Activated CD8-positive, alpha-beta T cell treated with anti-CD3 and anti-CD28 coated beads for 36 hours (primary cell): ENCODE measurements at regions of chr11 and their contacts with region 1.

Region 1: GRCh38 chr11:93741094-93741881 is at the starts of genes C11orf54 and TAF1D:
- DNase-seq: peak; percentile 97
- ATAC-seq: peak; percentile 87
- H3K4me3 Mint-ChIP-seq: peak within 1 kb of the TSS; percentile 98
- H3K27ac Mint-ChIP-seq: peak within 1 kb of the TSS; percentile 100
- H3K4me1 Mint-ChIP-seq: peaks cover 40% of the 10 kb centered on the region
- H3K27me3 Mint-ChIP-seq: no peaks in the 10 kb centered on the region
- CTCF ChIP-seq: no peak
- total RNA-seq, gene C11orf54: 17.0 to 18.9 TPM
- total RNA-seq, gene TAF1D: 334 to 344 TPM

Region 2: DNA sequence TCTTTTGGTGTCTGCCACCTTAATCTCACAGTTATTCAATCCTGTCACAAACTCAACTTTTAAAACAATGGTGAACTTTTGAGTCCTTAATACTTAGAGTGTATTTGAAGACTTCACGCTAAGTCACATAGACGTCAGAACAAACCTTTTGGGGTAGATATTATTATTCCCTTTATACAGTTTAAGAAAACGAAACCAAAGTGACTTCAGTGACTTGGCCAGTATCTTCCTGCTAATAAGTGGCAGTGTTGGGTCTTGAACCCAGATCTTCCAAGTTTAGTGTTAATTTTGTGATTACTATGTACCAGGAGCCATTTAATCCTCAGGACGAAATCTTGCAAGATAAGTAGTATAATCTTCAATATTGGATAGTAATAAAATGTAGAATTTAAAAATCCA is 79.1 kb before region 1 on chr11:
- CTCF ChIA-PET with region 1: no interaction called
- POLR2A ChIA-PET with region 1: interaction called, 25 read pairs
- intact Hi-C with region 1: no loop called
- DNase-seq: no peak
- ATAC-seq: no peak
- H3K4me3 Mint-ChIP-seq: peak overlapping the region; percentile 91
- H3K27ac Mint-ChIP-seq: peak overlapping the region; percentile 93
- H3K4me1 Mint-ChIP-seq: peaks cover 33% of the 10 kb centered on the region
- H3K27me3 Mint-ChIP-seq: no peaks in the 10 kb centered on the region
- CTCF ChIP-seq: no peak

Region 3: GRCh38 chr11:93727985-93728791 is 13.1 kb before region 1 on chr11:
- CTCF ChIA-PET with region 1: no interaction called
- POLR2A ChIA-PET with region 1: interaction called, 125 read pairs
- intact Hi-C with region 1: no loop called
- DNase-seq: no peak
- ATAC-seq: no peak
- H3K4me3 Mint-ChIP-seq: no peak overlapping the region
- H3K27ac Mint-ChIP-seq: peak overlapping the region; percentile 48
- H3K4me1 Mint-ChIP-seq: peaks cover 11% of the 10 kb centered on the region
- H3K27me3 Mint-ChIP-seq: no peaks in the 10 kb centered on the region
- CTCF ChIP-seq: no peak

Region 4: GRCh38 chr11:93756748-93757147 is 15.5 kb after region 1 on chr11:
- CTCF ChIA-PET with region 1: interaction called, 3 read pairs
- POLR2A ChIA-PET with region 1: interaction called, 14 read pairs
- intact Hi-C with region 1: no loop called
- DNase-seq: no peak
- ATAC-seq: no peak
- H3K4me3 Mint-ChIP-seq: no peak overlapping the region
- H3K27ac Mint-ChIP-seq: no peak overlapping the region
- H3K4me1 Mint-ChIP-seq: no peaks in the 10 kb centered on the region
- H3K27me3 Mint-ChIP-seq: no peaks in the 10 kb centered on the region
- CTCF ChIP-seq: no peak

Region 5: GRCh38 chr11:93784152-93784934 is 43.1 kb after region 1 on chr11 and contains the start of gene MED17:
- CTCF ChIA-PET with region 1: interaction called, 5 read pairs
- POLR2A ChIA-PET with region 1: interaction called, 109 read pairs
- intact Hi-C with region 1: loop called (anchors 2 kb)
- DNase-seq: peak; percentile 93
- ATAC-seq: peak; percentile 96
- H3K4me3 Mint-ChIP-seq: peak within 1 kb of the TSS; percentile 98
- H3K27ac Mint-ChIP-seq: peak within 1 kb of the TSS; percentile 96
- H3K4me1 Mint-ChIP-seq: peaks cover 32% of the 10 kb centered on the region
- H3K27me3 Mint-ChIP-seq: no peaks in the 10 kb centered on the region
- CTCF ChIP-seq: peak; percentile 50
- total RNA-seq, gene MED17: 30.1 to 31.3 TPM

Region 6: GRCh38 chr11:93817426-93818348 is 76.4 kb after region 1 on chr11:
- CTCF ChIA-PET with region 1: no interaction called
- POLR2A ChIA-PET with region 1: no interaction called
- intact Hi-C with region 1: no loop called
- DNase-seq: no peak
- ATAC-seq: no peak
- H3K4me3 Mint-ChIP-seq: no peak overlapping the region
- H3K27ac Mint-ChIP-seq: no peak overlapping the region
- H3K4me1 Mint-ChIP-seq: no peaks in the 10 kb centered on the region
- H3K27me3 Mint-ChIP-seq: no peaks in the 10 kb centered on the region
- CTCF ChIP-seq: no peak

Region 7: DNA sequence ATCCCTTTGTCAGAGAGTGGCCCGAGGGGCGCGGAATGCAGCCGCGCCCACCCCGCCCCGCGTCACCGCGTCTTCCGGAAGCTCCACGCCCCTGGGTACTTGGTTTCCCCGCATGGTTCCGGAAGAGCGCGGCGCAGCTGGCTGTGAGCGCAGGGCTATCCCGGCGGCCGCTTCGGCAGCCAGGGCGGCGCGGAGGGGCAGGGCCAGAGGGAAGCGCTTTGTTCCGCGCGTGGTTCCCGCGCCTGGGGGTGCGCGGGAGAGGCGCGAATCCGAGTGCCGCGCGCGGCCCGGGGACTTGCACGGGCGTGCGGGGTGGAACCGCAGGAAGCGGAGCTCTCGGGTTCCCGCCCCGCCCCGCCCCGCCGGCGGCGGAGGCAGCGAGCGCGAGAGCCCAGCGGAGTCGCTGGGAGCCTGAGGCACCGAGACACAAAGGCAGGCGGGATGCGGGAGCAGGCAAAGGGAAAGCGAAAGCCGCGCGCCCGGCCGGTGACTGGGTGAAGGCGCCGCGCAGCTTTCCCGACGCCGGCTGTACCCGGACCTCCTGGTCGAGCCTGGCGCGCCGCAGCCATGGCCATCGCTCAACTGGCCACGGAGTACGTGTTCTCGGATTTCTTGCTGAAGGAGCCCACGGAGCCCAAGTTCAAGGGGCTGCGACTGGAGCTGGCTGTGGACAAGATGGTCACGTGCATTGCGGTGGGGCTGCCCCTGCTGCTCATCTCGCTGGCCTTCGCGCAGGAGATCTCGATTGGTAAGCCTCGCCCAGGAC is 387.6 kb after region 1 on chr11 and contains the start of gene PANX1:
- CTCF ChIA-PET with region 1: no interaction called
- POLR2A ChIA-PET with region 1: interaction called, 12 read pairs
- intact Hi-C with region 1: loop called (anchors 10 kb)
- DNase-seq: peak; percentile 81
- ATAC-seq: peak; percentile 82
- H3K4me3 Mint-ChIP-seq: no peak within 1 kb of the TSS
- H3K27ac Mint-ChIP-seq: peak within 1 kb of the TSS; percentile 92
- H3K4me1 Mint-ChIP-seq: peaks cover 21% of the 10 kb centered on the region
- H3K27me3 Mint-ChIP-seq: no peaks in the 10 kb centered on the region
- CTCF ChIP-seq: no peak
- total RNA-seq, gene PANX1: 10.8 to 11.4 TPM

Region 8: DNA sequence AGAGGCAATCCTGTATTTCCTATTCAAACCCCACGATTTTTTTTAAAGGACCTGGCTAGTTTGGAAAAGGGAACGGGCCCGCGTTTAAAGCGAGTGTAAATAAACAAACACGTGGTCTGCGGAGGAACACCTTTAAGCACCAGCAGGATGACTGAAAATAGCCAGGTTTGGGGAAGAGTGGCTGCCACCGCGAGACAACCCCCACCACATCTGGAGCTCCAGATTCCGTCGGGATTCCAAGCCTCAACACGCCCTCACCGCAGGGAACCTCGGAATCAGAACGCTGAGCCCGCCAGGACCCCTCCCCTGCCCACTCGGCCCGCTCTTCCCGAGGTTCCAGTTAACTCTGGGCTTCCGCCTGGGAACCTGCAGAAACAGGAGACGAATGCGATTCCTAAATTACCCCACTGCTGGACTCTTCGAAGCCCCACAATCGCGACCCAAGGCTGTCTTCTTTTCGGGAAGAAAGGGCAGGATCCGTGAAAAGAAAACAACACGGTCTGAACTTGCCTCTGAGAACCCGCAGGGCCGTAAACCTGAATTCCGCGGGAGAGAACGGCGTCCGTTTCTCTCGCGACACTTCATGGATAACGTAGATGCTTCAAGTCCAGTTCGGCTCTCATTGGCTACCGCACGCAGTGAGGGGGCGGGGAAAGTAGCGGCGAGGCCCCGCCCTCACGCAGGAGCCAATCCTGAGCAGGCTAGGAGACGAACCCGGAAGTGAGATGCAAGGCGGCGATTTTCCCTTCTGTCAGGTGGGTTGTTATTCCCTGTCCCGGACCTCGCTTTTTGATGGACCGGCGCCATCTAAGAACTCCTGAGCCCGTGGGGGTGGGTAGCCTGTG is 752.2 kb after region 1 on chr11 and contains the starts of genes ANKRD49 and MRE11:
- CTCF ChIA-PET with region 1: no interaction called
- POLR2A ChIA-PET with region 1: interaction called, 10 read pairs
- intact Hi-C with region 1: no loop called
- DNase-seq: peak; percentile 98
- ATAC-seq: peak; percentile 100
- H3K4me3 Mint-ChIP-seq: peak within 1 kb of the TSS; percentile 94
- H3K27ac Mint-ChIP-seq: peak within 1 kb of the TSS; percentile 96
- H3K4me1 Mint-ChIP-seq: peaks cover 32% of the 10 kb centered on the region
- H3K27me3 Mint-ChIP-seq: no peaks in the 10 kb centered on the region
- CTCF ChIP-seq: no peak
- total RNA-seq, gene ANKRD49: 17.9 to 19.1 TPM
- total RNA-seq, gene MRE11: 38.3 to 42.0 TPM